Posterior vena cava (tissue), 2 donors: ENCODE measurements at regions of chr13 and their contacts with region 1.

Region 1: GRCh38 chr13:99656092-99656745 is 154.9 kb downstream of the TM9SF2 start:
- DNase-seq: no peak

Region 2: GRCh38 chr13:99062593-99062992 is 593.6 kb before region 1 on chr13:
- intact Hi-C with region 1: no loop called
- DNase-seq: no peak

Region 3: DNA sequence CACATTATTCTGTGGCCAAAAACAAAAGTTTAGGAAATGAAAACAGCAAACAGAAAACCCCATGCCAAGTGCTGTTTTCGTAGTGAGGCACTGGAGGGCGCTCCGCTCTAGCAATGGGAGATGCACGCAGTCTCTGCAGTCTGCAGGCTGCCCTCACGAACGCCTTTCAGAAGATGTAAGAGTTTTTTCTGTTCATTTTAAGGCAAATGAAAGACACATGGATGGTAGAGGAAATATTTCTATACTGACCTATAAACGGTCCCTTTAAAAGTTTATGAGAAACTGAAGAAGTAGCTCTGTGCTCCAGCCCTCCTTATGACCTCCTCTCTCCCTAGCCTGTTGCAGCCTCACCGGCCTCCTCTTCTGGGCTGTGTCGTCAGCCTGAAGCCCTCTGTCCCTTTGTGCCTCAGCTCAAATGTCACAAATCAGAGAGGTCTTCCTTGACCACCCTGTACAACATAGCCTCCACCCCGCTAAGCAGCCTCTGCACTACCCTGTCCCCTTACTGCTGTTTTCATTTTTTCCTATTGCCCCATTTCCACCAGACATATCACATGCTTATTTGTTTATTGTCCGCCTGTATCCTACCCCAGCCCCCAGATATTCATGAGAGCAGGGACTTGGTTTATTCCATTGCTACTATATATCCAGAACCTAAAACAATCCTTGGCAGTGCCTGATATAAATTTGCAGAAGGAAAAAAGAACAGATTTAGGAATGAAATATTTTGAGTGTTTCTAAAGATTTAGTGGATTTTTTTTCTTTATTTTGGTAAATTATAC is 38.6 kb before region 1 on chr13:
- intact Hi-C with region 1: loop called in 1 of 2 experiments (anchors 5 kb)
- DNase-seq: no peak

Region 4: DNA sequence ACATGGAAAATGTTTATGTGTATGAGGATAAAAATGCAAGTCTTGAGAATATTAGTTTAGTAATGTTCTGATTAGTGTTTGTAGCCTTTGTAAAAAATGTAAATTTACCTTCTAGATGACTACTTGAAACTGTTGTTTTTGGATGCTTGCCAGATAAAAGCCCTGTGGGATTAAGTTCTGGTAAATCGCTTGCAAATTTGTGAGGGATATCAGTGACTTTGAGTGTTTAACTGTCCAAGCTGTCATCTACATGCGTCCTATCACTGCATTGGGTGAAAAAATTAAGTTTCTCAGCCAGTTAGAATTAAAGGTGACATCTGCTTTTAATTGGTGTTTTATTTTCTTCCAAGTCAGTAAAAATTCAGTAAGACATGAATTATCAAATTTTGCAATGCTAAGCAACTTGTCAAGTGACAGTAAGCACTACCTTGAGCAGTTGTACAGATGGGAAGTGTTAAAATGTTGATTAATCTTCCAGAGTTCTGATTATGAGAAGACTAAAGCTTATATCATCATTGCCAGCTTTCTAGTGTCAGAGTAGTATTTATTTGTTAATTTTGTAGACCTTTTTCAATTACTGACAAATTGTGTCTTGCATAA is 520.7 kb after region 1 on chr13:
- intact Hi-C with region 1: no loop called
- DNase-seq: no peak